Mammary epithelial cell (primary cell): ENCODE measurements at regions of chr1 and their contacts with region 1.

Region 1: DNA sequence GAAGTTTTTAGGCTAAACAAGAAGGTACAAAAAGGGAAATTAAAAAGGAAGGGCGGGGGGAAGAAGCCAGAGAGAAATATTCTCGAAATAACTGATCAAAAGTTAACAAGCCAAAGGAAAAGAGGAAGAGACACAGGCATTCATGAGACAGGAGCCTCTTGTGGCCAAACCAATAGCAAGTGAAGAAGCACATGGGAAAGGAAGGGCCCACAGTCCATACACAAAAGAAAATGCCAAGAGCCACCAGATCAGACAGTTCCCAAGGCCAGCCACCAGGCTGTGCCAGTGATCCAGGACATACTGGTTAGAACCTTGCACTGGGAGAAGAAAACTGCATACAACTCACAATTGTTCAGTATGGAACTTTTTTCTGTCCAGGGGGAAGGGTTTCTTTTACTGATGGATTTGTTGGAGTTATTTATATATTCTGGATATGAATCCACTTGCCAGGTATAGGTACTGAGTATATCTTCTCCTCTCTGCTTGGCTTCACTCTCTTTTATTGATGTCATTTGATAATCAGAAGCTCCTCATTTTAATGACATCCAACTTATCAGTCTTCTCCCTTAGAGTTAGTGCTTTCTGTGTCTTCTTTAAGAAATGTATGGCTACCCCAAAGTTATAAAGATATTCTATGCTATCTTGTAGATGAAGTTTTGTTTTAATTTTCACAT is 76.8 kb downstream of the CD46 start:
- DNase-seq: peak; percentile 71
- H3K4me3 ChIP-seq: no peak overlapping the region
- H3K27ac ChIP-seq: no peak overlapping the region
- H3K4me1 ChIP-seq: peaks cover 15% of the 10 kb centered on the region
- H3K27me3 ChIP-seq: no peaks in the 10 kb centered on the region
- CTCF ChIP-seq: peak; percentile 87 to 95

Region 2: DNA sequence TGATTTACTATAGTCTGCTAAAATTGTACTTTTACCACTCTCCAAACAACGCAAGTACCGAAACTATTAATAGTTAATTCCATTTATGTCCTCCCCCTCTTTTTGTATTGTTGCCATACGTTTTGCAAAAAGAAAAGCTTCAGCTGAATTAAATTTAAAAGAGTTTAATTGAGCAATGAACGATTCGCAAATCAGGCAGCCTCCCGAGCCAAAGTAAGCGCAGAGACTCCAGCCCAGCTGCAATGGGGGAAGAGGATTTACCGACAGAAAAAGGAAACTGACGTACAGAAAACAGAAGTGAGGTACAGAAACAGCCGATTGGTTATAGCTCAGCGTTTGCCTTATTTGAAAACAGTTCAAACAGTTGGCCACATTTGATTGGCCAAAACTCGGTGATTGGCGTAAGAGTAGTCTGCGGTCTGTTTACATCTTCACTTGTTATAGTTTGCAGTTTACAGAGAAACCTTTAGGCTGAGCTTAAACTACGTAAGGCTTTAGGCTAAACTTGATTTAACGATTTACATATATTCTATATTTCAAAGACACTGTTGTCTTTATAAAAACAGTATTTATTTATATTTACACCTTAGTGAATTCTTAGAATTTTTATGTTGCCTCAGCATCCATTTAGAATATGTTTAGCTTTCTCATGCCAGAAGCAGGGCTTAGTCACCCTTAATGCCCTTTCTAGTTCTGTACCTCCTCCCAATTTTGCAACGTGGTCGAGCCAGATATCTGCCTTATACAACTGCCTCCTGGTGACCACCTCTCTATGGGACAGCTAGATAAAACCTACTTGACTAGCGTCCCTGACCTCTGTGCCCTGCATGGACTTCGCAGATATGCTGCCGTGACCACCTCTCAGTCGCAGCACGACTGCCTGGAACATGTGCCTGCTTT is 308.9 kb before region 1 on chr1:
- CTCF ChIA-PET with region 1: interaction called, 16 read pairs
- dilution Hi-C with region 1: no loop called
- in situ Hi-C with region 1: no loop called
- intact Hi-C with region 1: no loop called
- DNase-seq: no peak
- H3K4me3 ChIP-seq: no peak overlapping the region
- H3K27ac ChIP-seq: no peak overlapping the region
- H3K4me1 ChIP-seq: no peaks in the 10 kb centered on the region
- H3K27me3 ChIP-seq: peaks cover 6% of the 10 kb centered on the region
- CTCF ChIP-seq: no peak

Region 3: GRCh38 chr1:207848234-207848633 is 19.6 kb after region 1 on chr1:
- CTCF ChIA-PET with region 1: no interaction called
- dilution Hi-C with region 1: no loop called
- in situ Hi-C with region 1: no loop called
- intact Hi-C with region 1: loop called (anchors 2 kb)
- DNase-seq: peak; percentile 95
- H3K4me3 ChIP-seq: no peak overlapping the region
- H3K27ac ChIP-seq: peak overlapping the region; percentile 90
- H3K4me1 ChIP-seq: peaks cover 42% of the 10 kb centered on the region
- H3K27me3 ChIP-seq: no peaks in the 10 kb centered on the region
- CTCF ChIP-seq: no peak

Region 4: GRCh38 chr1:207868774-207869721 is 40.4 kb after region 1 on chr1:
- CTCF ChIA-PET with region 1: interaction called, 63 read pairs
- dilution Hi-C with region 1: loop called (anchors 5 kb)
- in situ Hi-C with region 1: loop called in 1 of 2 experiments (anchors 5 kb)
- intact Hi-C with region 1: loop called (anchors 1 kb)
- DNase-seq: peak; percentile 80
- H3K4me3 ChIP-seq: peak overlapping the region; percentile 69 to 82 (median 80)
- H3K27ac ChIP-seq: peak overlapping the region; percentile 68
- H3K4me1 ChIP-seq: peaks cover 24% of the 10 kb centered on the region
- H3K27me3 ChIP-seq: no peaks in the 10 kb centered on the region
- CTCF ChIP-seq: peak; percentile 66 to 67

Region 5: DNA sequence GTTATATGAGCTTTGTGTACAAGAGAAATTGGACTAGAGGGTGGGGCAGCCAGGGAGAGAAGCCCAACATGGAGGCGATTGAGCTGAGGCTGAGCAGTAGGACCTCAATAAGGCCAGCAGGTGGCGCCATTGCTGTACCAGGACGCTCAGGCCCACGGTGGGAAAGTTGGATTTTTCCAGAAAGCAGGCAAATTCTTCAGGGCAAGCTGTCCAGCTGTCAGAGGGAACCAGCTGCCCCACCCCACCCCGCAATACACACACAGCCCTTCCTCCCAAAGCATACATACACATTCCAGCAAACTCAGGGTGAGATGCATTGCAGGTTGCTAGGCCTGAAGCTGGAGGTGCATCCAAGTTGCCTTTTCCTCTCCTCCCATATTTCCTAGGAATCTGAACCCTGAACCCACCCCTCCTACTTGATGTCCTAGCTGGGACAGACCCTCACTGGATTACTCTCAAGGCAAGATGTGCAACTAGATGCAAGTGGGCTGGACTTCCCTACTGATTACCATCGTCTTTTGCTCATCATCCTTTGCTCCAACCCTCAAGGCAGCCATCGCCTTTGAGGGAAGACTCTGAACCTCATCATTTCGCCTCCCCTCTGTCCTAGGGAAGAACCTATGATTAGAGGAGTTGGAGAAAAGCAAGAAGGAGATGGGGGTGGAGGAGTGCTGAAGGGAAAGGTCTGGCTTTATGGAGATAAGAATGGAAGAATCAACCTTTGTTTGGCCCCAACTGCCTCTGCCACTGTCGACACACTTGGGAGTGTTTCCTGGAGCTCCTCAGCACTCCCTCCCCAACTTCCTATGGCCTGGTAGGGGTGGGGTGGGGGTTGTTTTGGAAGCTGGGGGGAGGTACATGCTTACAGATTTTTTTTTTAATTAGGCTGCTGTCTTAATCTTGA is 56.8 kb after region 1 on chr1:
- CTCF ChIA-PET with region 1: interaction called, 3 read pairs
- dilution Hi-C with region 1: no loop called
- in situ Hi-C with region 1: no loop called
- intact Hi-C with region 1: loop called (anchors 1 kb)
- DNase-seq: peak; percentile 46
- H3K4me3 ChIP-seq: no peak overlapping the region
- H3K27ac ChIP-seq: no peak overlapping the region
- H3K4me1 ChIP-seq: peaks cover 15% of the 10 kb centered on the region
- H3K27me3 ChIP-seq: no peaks in the 10 kb centered on the region
- CTCF ChIP-seq: peak; percentile 93 to 94